ENCODE measurements at regions of chr12 and their contacts with region 1.

Region 1: GRCh38 chr12:39764944-39765560 is 145.4 kb upstream of the ABCD2 start:
- DNase-seq: peak; percentile 62

Region 2: DNA sequence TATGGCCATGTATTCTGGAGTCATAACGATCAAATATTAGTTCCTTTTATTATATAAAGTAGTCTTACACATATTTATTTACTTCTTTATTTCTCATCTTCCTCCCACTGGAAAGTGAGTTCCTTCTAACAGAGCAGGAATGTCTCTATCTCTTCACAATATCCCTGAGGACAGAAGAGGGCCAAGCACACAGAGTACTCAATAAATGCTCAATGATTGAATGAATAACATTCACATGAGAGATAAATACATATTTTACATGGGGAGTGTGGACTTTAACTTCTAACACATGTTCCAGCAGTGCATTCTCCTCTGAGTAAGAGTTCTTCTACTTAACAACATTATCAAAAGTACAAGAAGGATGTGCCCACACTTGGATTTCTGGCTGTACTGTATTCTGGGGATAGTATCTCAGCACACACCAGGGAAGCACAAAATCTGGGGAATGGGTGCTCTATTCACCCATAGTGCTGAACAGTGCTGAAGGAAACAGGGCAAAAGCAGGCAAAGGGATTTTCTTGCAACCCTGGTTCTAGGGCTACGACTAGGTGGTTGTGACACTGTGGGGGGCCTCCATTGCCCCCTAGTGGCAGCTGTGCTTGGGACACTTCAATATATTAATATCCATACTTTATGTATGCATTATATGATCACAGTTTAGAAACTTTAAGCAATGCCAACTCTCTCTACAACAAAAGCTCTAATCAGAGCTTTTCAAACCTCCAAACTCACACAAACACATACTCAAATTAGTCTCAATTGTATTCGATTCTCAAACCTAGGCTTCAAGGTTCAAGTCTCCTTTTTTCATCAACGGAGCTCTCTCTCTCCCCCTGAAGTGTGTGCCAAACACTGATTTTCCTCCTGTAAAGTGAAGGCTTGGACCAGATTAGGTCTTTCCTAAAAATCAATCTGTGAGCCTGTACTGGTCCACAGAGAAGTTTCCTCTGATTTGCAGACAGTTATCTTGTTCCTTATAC is 225.4 kb after region 1 on chr12:
- in situ Hi-C with region 1: loop called (anchors 25 kb)
- DNase-seq: peak; percentile 68

Measured in ACHN (cell line).